ENCODE measurements at regions of chr4 and their contacts with region 1.

Region 1: DNA sequence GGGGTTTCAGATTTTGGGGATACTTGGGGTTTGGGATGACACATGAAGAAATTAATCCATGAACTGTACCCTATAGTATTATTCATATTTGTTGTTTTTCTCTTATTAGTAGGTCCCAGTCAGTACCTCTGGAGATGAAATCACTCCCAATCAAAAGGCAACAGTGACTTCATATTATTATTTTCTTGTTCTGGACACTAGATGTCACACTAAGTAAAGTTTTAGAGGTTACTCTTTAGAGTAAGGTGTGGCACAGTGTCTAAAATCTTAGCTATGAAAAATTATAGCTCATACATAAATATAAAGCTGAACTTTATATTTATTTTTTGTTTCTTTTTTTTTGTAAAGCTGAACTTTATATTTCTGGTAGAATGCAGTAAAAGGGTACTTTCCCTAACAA is 35.1 kb downstream of the FAM114A1 start:
- DNase-seq: peak; percentile 47
- H3K4me3 Mint-ChIP-seq: no peak overlapping the region
- H3K27ac Mint-ChIP-seq: no peak overlapping the region
- H3K4me1 Mint-ChIP-seq: no peaks in the 10 kb centered on the region
- H3K27me3 Mint-ChIP-seq: no peaks in the 10 kb centered on the region
- CTCF ChIP-seq: peak; percentile 55

Region 2: GRCh38 chr4:38889143-38889542 is 13.6 kb before region 1 on chr4:
- CTCF ChIA-PET with region 1: interaction called, 18 read pairs
- POLR2A ChIA-PET with region 1: interaction called, 3 read pairs
- intact Hi-C with region 1: no loop called
- DNase-seq: peak; percentile 64
- H3K4me3 Mint-ChIP-seq: peak overlapping the region; percentile 21
- H3K27ac Mint-ChIP-seq: peak overlapping the region; percentile 49
- H3K4me1 Mint-ChIP-seq: peaks cover 6% of the 10 kb centered on the region
- H3K27me3 Mint-ChIP-seq: no peaks in the 10 kb centered on the region
- CTCF ChIP-seq: no peak

Region 3: DNA sequence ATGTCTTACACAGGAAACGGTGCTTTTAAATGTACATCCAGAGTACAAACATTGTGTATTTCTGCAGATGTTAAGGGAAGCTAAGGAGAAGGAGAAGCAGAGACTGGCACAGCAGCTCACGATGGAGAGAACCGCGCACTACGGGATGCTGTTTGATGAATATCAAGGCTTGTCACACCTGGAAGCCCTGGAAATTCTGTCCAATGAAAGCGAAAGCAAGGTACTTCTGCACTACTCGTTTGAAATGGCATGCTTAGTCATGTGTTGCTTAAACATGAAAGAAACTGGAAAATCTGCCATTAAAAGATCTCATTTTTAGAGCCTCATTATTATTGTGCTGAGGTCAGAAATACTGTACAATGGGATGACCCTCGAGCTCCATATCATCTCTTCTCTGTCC is 12.2 kb after region 1 on chr4:
- CTCF ChIA-PET with region 1: interaction called, 16 read pairs
- POLR2A ChIA-PET with region 1: no interaction called
- intact Hi-C with region 1: no loop called
- DNase-seq: no peak
- H3K4me3 Mint-ChIP-seq: no peak overlapping the region
- H3K27ac Mint-ChIP-seq: no peak overlapping the region
- H3K4me1 Mint-ChIP-seq: no peaks in the 10 kb centered on the region
- H3K27me3 Mint-ChIP-seq: no peaks in the 10 kb centered on the region
- CTCF ChIP-seq: no peak

Region 4: GRCh38 chr4:39181905-39182638 is 279.4 kb after region 1 on chr4 and contains the start of gene WDR19:
- CTCF ChIA-PET with region 1: interaction called, 19 read pairs
- POLR2A ChIA-PET with region 1: interaction called, 3 read pairs
- intact Hi-C with region 1: no loop called
- DNase-seq: peak; percentile 100
- H3K4me3 Mint-ChIP-seq: no peak within 1 kb of the TSS
- H3K27ac Mint-ChIP-seq: no peak within 1 kb of the TSS
- H3K4me1 Mint-ChIP-seq: no peaks in the 10 kb centered on the region
- H3K27me3 Mint-ChIP-seq: no peaks in the 10 kb centered on the region
- CTCF ChIP-seq: peak; percentile 29
- total RNA-seq, gene WDR19: 32.5 and 39.6 TPM in 2 replicates